MCF 10A (cell line): ENCODE measurements at regions of chrX and their contacts with region 1.

Region 1: DNA sequence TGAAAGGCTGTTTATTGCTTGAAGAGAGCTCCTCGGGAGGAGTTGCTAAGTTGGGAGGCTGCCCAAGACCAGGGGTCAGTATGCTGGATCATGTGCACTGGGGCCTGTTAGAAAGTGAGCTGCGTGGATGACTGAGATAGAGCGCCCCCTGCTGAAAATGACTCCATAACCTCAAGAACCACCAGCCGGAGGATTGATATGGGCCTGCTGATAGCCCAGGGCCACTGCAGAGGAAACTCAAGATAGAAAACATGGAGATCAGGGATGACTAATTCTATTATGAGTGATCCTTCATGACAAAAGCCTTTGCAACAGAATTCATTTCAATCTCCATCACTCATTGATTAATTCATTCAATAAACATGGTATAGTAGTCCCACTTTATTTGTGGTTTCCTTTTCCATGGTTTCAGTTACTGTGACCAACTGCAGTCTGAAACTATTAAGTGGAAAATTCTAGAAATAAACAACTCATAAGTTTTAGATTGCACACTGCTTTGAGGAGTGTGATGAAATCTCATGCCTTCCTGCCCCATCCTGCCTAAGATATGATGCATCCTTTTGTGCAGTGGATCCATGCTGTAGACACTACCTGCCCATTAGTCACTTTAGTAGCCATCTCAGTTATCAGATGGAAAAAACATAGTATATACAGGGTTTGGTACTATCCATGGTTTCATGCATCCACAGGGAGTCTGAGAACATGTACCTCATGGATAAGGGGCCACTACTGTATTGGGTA is 126.7 kb upstream of the MBNL3 start:
- DNase-seq: peak; percentile 64
- H3K4me3 Mint-ChIP-seq: no peak overlapping the region
- H3K27ac Mint-ChIP-seq: no peak overlapping the region
- H3K4me1 Mint-ChIP-seq: no peaks in the 10 kb centered on the region
- H3K27me3 Mint-ChIP-seq: peaks cover 59% of the 10 kb centered on the region
- CTCF ChIP-seq: peak; percentile 18

Region 2: GRCh38 chrX:132092439-132093065 is 523.0 kb before region 1 on chrX:
- CTCF ChIA-PET with region 1: interaction called, 6 read pairs
- POLR2A ChIA-PET with region 1: no interaction called
- intact Hi-C with region 1: loop called (anchors 5 kb)
- DNase-seq: peak; percentile 73
- H3K4me3 Mint-ChIP-seq: no peak overlapping the region
- H3K27ac Mint-ChIP-seq: no peak overlapping the region
- H3K4me1 Mint-ChIP-seq: peaks cover 6% of the 10 kb centered on the region
- H3K27me3 Mint-ChIP-seq: peaks cover 55% of the 10 kb centered on the region
- CTCF ChIP-seq: peak; percentile 80

Region 3: DNA sequence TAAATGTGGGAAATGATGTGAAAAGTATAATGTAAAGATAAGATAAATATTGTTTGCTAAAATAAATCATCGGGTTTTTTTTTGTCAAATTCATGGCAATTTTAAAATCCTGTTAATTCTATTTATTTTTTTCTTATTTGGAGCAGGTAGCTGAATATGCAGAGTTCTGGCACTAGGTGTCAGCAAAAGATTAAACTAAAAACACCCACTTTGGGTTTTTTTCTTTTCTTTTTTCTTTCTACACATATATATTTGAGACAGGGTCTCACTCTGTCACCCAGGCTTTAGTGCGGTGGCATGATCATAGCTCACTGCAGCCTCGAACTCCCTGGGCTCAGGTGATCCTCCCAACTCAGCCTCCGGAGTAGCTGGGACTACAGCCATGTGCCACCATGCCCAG is 389.4 kb before region 1 on chrX:
- CTCF ChIA-PET with region 1: interaction called, 38 read pairs
- POLR2A ChIA-PET with region 1: interaction called, 4 read pairs
- intact Hi-C with region 1: loop called (anchors 1 kb)
- DNase-seq: no peak
- H3K4me3 Mint-ChIP-seq: no peak overlapping the region
- H3K27ac Mint-ChIP-seq: no peak overlapping the region
- H3K4me1 Mint-ChIP-seq: peaks cover 10% of the 10 kb centered on the region
- H3K27me3 Mint-ChIP-seq: peaks cover 73% of the 10 kb centered on the region
- CTCF ChIP-seq: peak; percentile 38

Region 4: DNA sequence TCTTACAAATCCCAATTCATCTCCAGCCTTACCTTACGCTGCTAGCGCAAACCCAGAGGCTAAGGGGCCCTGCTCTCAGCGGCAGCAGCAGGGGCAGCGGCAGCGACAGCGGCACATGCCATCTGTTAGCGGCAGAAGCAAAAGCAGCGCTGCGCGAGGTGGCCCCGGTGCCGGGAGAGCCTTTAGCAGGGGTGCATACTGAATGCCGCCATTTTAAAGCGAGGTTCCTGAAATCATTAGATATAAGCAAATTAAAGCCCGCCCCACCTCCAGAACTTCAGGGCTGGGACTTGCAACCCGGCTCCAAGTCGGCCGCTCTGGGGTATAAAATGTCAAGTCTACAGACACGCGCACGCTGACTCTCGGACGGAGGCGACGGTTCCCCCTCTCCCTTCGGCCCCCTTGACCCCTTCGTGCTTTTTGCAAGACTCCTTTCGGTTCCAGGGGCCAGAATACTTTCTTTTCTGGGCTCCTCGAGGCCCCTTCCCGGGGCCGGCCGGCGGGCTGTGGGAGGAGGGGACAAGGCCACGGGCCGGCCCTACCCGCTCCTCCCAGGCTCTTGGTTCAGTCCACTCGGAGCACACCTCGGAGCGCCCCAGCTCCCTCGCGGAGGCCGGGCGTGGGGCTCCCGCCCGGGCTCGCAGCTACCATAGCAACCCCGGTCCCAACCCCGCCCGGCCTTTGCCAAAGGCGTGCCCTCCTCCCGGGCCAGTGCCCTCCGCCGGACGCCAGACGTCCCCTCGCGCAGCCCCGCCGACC is 126.6 kb before region 1 on chrX and contains the start of gene MBNL3:
- CTCF ChIA-PET with region 1: interaction called, 9 read pairs
- POLR2A ChIA-PET with region 1: no interaction called
- intact Hi-C with region 1: loop called (anchors 10 kb)
- DNase-seq: peak; percentile 76
- H3K4me3 Mint-ChIP-seq: peak within 1 kb of the TSS; percentile 83
- H3K27ac Mint-ChIP-seq: peak within 1 kb of the TSS; percentile 79
- H3K4me1 Mint-ChIP-seq: peaks cover 13% of the 10 kb centered on the region
- H3K27me3 Mint-ChIP-seq: peaks cover 31% of the 10 kb centered on the region
- CTCF ChIP-seq: no peak
- total RNA-seq, gene MBNL3: 14.0 and 17.7 TPM in 2 replicates

Region 5: DNA sequence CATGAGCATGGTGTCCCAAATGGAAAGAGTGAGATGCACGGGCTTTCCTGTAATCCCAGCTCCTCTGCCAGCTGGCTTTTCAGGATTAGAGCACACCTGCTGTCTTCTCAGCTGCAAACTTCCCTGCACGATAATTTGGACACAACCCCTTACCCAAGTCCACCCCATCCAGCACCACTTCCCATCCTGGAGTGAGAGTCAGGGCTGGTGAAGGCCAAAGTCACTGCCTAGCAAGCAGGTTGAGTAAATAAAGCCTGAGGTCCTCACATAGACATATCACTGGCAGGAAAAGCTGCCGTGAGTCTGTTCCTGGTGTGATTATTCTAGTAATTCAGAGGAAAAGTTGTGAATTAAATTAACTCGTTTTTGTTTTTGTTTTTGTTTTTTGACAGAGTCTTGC is 12.9 kb before region 1 on chrX:
- CTCF ChIA-PET with region 1: interaction called, 32 read pairs
- POLR2A ChIA-PET with region 1: no interaction called
- intact Hi-C with region 1: no loop called
- DNase-seq: no peak
- H3K4me3 Mint-ChIP-seq: no peak overlapping the region
- H3K27ac Mint-ChIP-seq: no peak overlapping the region
- H3K4me1 Mint-ChIP-seq: no peaks in the 10 kb centered on the region
- H3K27me3 Mint-ChIP-seq: peaks cover 84% of the 10 kb centered on the region
- CTCF ChIP-seq: no peak